ENCODE measurements at regions of chr18 and their contacts with region 1.

Region 1: DNA sequence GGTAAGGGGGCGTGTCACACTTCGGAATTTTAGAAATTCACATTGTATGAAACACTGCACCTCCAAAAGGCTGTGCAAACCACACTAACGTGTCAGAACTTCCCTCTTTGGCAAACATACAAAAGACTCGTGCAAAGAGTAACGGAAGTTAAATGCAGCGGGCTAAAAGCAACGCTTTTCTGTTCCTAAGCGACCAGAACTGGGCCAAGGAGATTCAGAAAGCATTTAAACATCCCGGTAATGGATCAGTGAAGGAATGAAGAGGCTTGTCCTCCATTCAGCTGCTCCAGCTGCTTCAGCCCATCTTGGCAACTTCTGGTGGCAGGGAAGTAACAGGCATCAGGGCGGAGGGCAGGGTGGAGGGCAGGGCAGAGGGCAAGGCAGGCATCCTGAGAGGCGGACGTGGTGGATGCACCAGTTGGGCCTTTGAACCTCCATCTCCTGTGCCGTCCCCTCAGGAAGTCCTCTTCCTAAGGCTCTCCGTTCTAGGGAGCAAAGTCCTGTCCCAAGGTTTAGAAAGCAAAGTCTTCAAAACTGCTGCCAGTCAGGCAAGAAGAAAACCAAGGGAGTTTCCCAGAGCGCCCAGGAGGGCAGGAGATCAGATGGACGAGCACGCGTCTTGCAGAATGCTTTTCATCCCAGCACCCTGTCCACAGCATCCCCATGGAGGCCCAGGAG is 230.7 kb downstream of the ZNF516 start:
- DNase-seq: no peak
- H3K4me3 ChIP-seq: no peak overlapping the region
- H3K27ac ChIP-seq: no peak overlapping the region
- H3K4me1 ChIP-seq: peaks cover 0 to 18% (median 11%) of the 10 kb centered on the region in 4 experiments; a peak in 5 of 7 replicates
- H3K27me3 ChIP-seq: peaks cover 0 to 3% (median 0%) of the 10 kb centered on the region in 4 experiments; a peak in 1 of 7 replicates
- CTCF ChIP-seq: no peak
- EP300 ChIP-seq: no peak
- POLR2A ChIP-seq: no peak
- RAD21 ChIP-seq: no peak

Region 2: GRCh38 chr18:76252880-76253279 is 11.5 kb before region 1 on chr18:
- CTCF ChIA-PET with region 1: interaction called, 16 read pairs
- POLR2A ChIA-PET with region 1: no interaction called
- DNase-seq: no peak
- H3K4me3 ChIP-seq: no peak overlapping the region
- H3K27ac ChIP-seq: no peak overlapping the region
- H3K4me1 ChIP-seq: no peaks in the 10 kb centered on the region
- H3K27me3 ChIP-seq: no peaks in the 10 kb centered on the region
- CTCF ChIP-seq: peak in 2 of 3 experiments; percentile 51 to 88; a peak in 2 of 4 replicates
- EP300 ChIP-seq: no peak
- POLR2A ChIP-seq: no peak
- RAD21 ChIP-seq: peak; percentile 62 to 71

Region 3: GRCh38 chr18:76390452-76391035 is 126.2 kb after region 1 on chr18:
- CTCF ChIA-PET with region 1: no interaction called
- POLR2A ChIA-PET with region 1: no interaction called
- DNase-seq: no peak
- H3K4me3 ChIP-seq: no peak overlapping the region
- H3K27ac ChIP-seq: no peak overlapping the region
- H3K4me1 ChIP-seq: peaks cover 0 to 8% (median 1%) of the 10 kb centered on the region in 4 experiments; a peak in 3 of 7 replicates
- H3K27me3 ChIP-seq: no peaks in the 10 kb centered on the region
- CTCF ChIP-seq: no peak
- EP300 ChIP-seq: no peak
- POLR2A ChIP-seq: no peak
- RAD21 ChIP-seq: no peak

Region 4: GRCh38 chr18:76405681-76406356 is 141.5 kb after region 1 on chr18:
- CTCF ChIA-PET with region 1: no interaction called
- POLR2A ChIA-PET with region 1: no interaction called
- DNase-seq: peak; percentile 43 to 87
- H3K4me3 ChIP-seq: no peak overlapping the region
- H3K27ac ChIP-seq: no peak overlapping the region
- H3K4me1 ChIP-seq: no peaks in the 10 kb centered on the region
- H3K27me3 ChIP-seq: no peaks in the 10 kb centered on the region
- CTCF ChIP-seq: peak; percentile 65 to 83 (median 66)
- EP300 ChIP-seq: no peak
- POLR2A ChIP-seq: no peak
- RAD21 ChIP-seq: peak; percentile 63 to 73